T-cell (primary cell): ENCODE measurements at regions of chr3 and their contacts with region 1.

Region 1: DNA sequence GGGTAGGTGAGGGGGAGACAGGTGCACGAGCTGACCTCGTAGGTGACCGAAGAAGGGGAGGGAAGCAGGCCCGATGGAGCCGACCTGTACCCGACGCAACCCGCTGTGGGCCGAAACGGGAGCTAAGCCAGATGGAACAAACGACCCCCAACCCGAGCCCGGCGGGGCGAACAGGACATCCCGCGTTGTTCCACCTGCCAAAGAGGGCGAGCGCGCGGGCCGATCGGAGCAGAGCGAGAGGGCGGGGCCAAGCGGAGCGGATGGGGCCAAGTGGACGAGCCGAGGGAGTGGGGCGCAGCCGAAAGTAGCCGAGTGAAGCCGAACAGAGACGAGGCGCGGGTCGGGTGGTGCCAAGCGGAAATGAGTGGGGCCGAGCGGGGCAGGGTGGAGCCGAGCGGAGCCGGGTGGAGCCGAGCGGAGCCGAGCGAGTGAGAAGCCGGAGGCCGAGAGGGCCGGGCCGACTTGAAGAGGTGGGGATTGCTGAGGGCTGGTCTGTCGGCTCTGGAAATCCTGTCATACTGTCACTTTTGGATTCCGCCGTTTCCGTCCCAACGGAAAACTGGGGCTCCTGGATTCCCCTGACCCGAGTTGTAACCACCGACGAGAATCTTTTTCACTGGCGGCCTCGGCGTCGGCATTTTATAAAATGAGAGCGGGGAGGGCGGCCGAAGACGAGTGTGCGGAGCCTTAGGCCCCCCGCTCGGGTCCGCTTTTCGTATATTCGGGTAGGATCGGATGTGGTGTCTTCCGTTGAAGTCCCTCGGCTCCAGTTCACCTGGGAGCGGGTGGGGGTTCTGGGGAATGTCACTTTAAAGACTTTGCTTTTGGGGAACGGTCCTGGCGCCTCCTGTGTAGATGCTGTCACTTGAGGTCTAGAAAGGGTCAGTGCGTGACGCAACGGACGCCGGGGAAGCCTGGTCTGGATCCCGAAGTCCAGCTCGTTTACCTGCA is 15.6 kb upstream of the WNT7A start:
- DNase-seq: peak; percentile 85 to 96 (median 93)
- ATAC-seq: peak; percentile 93 to 96 (median 94)
- H3K4me3 ChIP-seq: peak overlapping the region; percentile 71 to 87
- H3K4me3 Mint-ChIP-seq: peak overlapping the region; percentile 88 to 92 (median 88)
- H3K27ac ChIP-seq: peak overlapping the region; percentile 70
- H3K27ac Mint-ChIP-seq: peak overlapping the region; percentile 91
- H3K4me1 ChIP-seq: peaks cover 12 to 41% of the 10 kb centered on the region in 2 experiments
- H3K4me1 Mint-ChIP-seq: peaks cover 26 to 39% (median 32%) of the 10 kb centered on the region in 3 donors
- H3K27me3 ChIP-seq: no peaks in the 10 kb centered on the region
- H3K27me3 Mint-ChIP-seq: peaks cover 0 to 2% of the 10 kb centered on the region in 2 donors

Region 2: DNA sequence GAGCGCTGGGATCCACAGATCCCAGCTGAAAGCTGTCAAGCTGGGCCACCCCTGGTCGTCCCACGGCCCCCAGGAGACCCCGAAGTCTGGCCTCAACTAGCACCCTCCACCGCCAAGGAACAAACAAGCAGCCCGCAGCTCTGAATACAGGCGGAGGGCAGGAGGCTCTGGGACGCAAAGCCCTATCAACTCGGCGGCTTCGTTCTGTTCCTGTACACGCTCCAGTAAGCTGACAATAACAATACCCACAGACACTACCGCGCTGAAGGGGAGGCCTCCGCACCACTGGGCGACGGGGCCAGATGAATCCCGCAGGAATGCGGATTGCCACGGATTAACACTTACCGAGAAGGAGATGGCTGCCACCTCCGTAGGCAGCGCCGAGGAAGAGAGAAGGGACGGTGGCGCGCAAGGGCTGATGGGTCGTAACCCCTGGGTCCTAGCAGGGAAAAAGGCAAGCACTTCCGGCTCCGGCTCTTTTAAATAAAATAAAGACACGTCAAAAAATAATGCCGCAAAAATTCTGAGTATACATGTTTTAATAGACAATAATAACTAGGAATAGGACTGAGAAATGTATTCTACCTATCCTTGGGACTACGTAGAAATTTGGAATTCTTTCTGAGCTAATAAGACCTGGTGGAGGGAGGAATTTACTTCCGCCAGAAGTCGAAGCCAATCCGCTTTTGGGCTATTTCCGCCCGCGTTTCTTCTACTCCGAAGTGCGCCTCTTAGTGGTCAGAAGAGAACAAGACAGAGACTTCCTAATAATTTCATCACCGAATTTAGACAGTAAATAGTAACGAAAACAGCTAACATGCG is 1054.1 kb before region 1 on chr3 and contains the start of gene RPL32:
- CTCF ChIA-PET with region 1: no interaction called
- POLR2A ChIA-PET with region 1: no interaction called
- DNase-seq: peak; percentile 76 to 97 (median 84)
- ATAC-seq: peak; percentile 86 to 94 (median 91)
- H3K4me3 ChIP-seq: peak within 1 kb of the TSS; percentile 81 to 89
- H3K4me3 Mint-ChIP-seq: peak within 1 kb of the TSS; percentile 94 to 97 (median 97)
- H3K27ac ChIP-seq: peak within 1 kb of the TSS; percentile 98
- H3K27ac Mint-ChIP-seq: peak within 1 kb of the TSS; percentile 100
- H3K4me1 ChIP-seq: peaks cover 3 to 39% of the 10 kb centered on the region in 2 experiments
- H3K4me1 Mint-ChIP-seq: peaks cover 45 to 47% (median 47%) of the 10 kb centered on the region in 3 donors
- H3K27me3 ChIP-seq: no peaks in the 10 kb centered on the region
- H3K27me3 Mint-ChIP-seq: no peaks in the 10 kb centered on the region
- total RNA-seq, gene RPL32: 3,117 to 3,787 (median 3,363) TPM

Region 3: DNA sequence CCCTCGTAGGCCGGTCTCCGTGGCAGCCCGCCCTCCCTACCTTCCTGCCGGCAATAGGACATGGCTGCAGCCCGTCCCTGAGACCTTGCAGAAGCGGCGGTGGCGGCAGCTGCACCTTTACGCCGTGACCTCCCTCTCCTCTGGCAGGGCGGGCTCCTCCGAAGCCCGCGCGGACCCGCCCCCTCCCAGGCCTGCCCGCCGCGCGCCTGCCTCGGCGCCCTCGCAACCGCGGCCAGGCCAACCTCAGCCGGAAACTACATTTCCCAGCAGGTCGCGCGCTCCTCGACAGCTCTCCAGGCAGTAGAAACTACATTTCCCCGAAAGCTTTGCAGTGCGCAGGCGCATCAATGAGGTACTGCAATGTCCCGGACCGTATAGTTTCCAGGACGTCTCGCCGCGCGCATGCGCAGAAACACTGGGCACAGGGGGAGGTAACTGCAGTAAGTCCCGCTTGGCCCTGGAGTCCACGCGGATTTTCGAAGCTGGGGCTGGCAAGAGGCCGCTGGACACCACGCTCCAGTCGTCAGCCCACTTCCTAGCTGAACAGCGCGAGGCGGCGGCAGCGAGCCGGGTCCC is 229.3 kb after region 1 on chr3 and contains the starts of genes CHCHD4 and TMEM43:
- CTCF ChIA-PET with region 1: interaction called, 3 to 11 read pairs
- POLR2A ChIA-PET with region 1: no interaction called
- DNase-seq: peak; percentile 88 to 100 (median 98)
- ATAC-seq: peak; percentile 91 to 93 (median 92)
- H3K4me3 ChIP-seq: peak within 1 kb of the TSS; percentile 97 to 98
- H3K4me3 Mint-ChIP-seq: peak within 1 kb of the TSS; percentile 93 to 95 (median 94)
- H3K27ac ChIP-seq: peak within 1 kb of the TSS; percentile 86
- H3K27ac Mint-ChIP-seq: peak within 1 kb of the TSS; percentile 90 to 92
- H3K4me1 ChIP-seq: peaks cover 23 to 41% of the 10 kb centered on the region in 2 experiments
- H3K4me1 Mint-ChIP-seq: peaks cover 61 to 73% (median 63%) of the 10 kb centered on the region in 3 donors
- H3K27me3 ChIP-seq: no peaks in the 10 kb centered on the region
- H3K27me3 Mint-ChIP-seq: no peaks in the 10 kb centered on the region
- total RNA-seq, gene CHCHD4: 2.7 to 8.4 (median 8.3) TPM
- total RNA-seq, gene TMEM43: 36.9 to 76.3 (median 63.6) TPM

Region 4: GRCh38 chr3:14203521-14204079 is 308.2 kb after region 1 on chr3:
- CTCF ChIA-PET with region 1: interaction called, 3 to 15 read pairs
- POLR2A ChIA-PET with region 1: no interaction called
- DNase-seq: peak in 28 of 35 experiments; percentile 9 to 71 (median 23)
- ATAC-seq: peak; percentile 44 to 69 (median 55)
- H3K4me3 ChIP-seq: no peak overlapping the region
- H3K4me3 Mint-ChIP-seq: no peak overlapping the region
- H3K27ac ChIP-seq: no peak overlapping the region
- H3K27ac Mint-ChIP-seq: peak overlapping the region in 1 of 2 donors; percentile 64
- H3K4me1 ChIP-seq: peaks cover 0 to 7% of the 10 kb centered on the region in 2 experiments
- H3K4me1 Mint-ChIP-seq: peaks cover 4 to 5% (median 5%) of the 10 kb centered on the region in 3 donors
- H3K27me3 ChIP-seq: no peaks in the 10 kb centered on the region
- H3K27me3 Mint-ChIP-seq: no peaks in the 10 kb centered on the region

Region 5: DNA sequence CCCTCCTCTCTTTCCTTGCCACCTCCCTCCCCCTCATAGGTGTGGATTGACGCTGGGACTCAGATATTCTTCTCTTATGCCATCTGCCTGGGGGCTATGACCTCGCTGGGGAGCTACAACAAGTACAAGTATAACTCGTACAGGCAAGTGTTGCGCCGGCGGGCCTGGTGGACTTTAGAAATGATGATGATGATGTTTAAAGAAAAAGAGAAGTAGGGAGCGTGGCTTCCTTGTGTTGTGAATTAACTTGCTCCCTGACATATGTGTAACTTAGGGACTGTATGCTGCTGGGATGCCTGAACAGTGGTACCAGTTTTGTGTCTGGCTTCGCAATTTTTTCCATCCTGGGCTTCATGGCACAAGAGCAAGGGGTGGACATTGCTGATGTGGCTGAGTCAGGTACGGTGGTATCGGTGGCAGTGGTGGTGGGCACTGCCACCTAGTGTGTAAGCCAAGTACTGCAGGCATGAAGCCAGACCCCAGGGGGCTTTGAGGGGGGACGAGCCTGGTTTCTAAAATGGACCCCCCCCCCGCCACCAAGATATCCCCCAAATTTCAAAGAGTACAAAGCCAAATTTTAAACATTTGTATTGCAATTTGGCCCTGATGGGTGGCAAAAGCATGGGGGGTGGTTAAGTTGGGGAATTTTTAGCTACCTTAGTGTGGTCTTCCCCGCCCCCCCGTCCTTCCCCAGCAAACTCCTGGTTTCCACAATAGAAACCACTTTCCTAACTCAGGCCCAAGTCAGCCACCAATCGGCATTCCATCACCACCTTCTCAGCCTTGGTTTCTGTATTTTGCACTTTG is 572.6 kb after region 1 on chr3:
- CTCF ChIA-PET with region 1: interaction called, 6 to 10 read pairs
- POLR2A ChIA-PET with region 1: no interaction called
- DNase-seq: peak in 30 of 35 experiments; percentile 8 to 72 (median 31)
- ATAC-seq: peak; percentile 47 to 77 (median 66)
- H3K4me3 ChIP-seq: no peak overlapping the region
- H3K4me3 Mint-ChIP-seq: no peak overlapping the region
- H3K27ac ChIP-seq: no peak overlapping the region
- H3K27ac Mint-ChIP-seq: no peak overlapping the region
- H3K4me1 ChIP-seq: no peaks in the 10 kb centered on the region
- H3K4me1 Mint-ChIP-seq: no peaks in the 10 kb centered on the region
- H3K27me3 ChIP-seq: no peaks in the 10 kb centered on the region
- H3K27me3 Mint-ChIP-seq: no peaks in the 10 kb centered on the region